HEK293T (cell line): ENCODE measurements at regions of chr13 and their contacts with region 1.

Region 1: DNA sequence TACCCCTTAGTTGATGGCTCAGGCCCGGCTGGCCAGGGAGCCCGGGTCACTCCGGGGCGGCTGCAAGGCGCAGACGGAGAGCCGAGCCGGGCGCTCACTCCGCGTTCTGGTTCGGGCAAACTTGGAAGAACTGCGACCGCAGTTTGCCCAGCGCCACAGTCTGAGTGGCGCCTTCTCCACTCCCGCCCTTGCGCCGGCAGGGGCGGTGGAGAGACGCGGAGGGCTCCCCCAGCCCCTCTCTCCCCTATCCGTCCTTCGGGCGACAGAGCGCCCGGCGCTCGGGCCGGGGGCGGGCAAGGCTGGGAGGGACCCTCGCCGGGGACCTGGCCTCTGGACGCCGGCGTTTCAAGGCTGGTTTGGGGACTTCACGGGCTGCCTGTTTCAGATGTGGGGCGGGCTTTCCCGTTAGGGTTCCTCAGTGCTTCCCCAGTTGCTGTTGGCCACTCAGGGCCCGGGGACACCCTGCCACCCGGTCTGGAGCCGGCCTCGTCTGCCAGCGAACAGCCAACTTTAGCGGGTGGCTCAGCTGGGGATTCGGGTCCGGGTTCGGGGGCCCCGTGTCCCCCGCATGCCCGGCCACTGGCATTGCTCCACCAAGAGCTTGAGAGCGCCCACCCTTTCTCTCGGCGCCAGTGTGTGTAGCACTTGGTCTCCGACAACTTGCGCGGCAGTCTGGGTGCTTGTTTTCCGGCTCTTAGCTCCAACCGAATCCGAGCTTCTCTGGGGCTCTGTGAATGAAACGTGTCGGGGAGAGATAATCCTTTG is 1.5 kb downstream of the GPC6 start:
- DNase-seq: peak; percentile 87

Region 2: DNA sequence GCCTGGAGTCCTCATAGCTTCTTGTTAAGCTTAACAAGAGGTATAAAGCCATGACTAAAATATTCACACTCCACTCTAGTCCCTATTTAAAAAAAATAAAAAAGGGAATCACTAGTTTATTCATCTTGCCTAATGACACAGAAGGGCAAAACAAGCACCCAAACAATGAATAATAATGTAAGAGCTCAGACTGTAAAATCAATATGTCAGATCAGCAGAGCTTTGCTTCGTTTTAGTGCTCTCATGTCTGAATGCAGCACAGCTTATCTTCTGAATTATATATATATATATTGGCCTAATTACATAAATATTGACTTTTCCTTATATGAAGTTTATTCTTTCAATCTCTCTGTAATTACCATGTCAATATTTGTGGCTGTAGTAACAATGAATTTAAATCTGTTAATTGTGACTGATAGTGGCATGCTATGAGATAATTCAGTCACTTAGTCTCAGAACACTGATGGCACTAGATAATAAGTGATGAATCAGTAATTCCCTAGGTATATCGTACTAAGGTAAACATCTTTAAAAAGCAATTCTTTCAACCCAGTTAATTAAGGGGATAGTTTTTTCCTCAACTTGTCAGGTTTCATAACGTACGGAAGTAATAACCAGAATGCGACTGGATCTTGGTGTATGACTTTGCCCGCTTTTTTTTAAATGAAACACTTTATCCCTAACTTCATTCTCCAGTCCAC is 363.3 kb before region 1 on chr13:
- CTCF ChIA-PET with region 1: no interaction called
- POLR2A ChIA-PET with region 1: no interaction called
- DNase-seq: no peak

Region 3: DNA sequence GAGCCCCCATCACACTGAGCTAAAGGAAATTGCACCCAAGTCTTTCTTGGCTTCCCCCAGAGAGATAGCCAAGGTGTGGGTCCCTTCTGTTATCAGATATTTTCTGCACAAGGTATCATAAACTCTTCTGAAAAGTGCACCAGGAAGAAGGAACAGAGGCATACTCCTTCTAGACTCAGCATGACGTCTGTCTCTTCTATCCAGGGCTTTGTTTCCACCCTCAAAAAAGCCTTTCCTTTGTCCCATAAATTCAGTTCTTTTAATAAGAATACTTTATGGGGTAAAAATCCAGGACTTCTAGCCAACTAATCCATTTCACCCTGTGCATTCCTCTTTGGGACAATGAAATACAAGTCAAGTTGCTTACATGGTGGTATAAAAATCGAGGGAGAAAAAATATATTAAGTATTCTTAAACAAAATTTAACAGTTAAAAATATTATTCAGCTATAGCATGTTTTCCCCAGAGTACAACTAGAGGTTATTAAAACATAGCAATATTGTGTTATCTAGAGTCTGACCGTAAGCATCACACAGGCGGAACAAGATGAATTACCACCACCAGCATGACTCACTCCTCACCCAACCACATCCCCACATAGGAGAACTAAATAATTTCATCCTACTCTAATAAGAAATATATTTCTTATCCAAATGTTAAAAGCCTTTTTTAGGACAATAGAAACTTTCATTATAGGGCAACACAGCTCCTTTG is 81.3 kb before region 1 on chr13:
- CTCF ChIA-PET with region 1: no interaction called
- POLR2A ChIA-PET with region 1: no interaction called
- DNase-seq: no peak

Region 4: DNA sequence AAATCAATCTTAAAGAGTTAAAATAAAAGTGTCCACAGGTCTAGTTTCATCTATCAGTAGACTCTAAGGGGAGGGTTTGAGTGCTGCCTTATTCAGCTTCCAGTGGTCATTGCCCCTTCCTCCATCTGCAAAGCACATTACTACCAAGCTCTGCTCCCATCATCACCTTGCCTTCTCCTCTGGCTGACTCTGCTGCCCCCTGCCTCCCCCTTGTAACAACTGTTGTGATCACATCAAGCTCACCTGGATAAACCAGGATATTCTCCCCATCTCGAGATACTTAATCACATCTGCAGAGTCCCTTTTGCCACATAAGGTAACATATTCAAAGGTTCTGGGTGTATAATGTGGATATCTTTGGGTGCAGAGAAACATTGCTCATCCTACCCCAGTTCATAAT is 44.8 kb before region 1 on chr13:
- CTCF ChIA-PET with region 1: no interaction called
- POLR2A ChIA-PET with region 1: no interaction called
- DNase-seq: no peak

Region 5: GRCh38 chr13:93248627-93249047 is 20.6 kb after region 1 on chr13:
- CTCF ChIA-PET with region 1: interaction called, 4 read pairs
- POLR2A ChIA-PET with region 1: interaction called, 21 read pairs
- DNase-seq: peak; percentile 73

Region 6: GRCh38 chr13:93270769-93271742 is 43.0 kb after region 1 on chr13:
- CTCF ChIA-PET with region 1: no interaction called
- POLR2A ChIA-PET with region 1: no interaction called
- DNase-seq: no peak